ENCODE measurements at regions of chr3 and their contacts with region 1.

Region 1: DNA sequence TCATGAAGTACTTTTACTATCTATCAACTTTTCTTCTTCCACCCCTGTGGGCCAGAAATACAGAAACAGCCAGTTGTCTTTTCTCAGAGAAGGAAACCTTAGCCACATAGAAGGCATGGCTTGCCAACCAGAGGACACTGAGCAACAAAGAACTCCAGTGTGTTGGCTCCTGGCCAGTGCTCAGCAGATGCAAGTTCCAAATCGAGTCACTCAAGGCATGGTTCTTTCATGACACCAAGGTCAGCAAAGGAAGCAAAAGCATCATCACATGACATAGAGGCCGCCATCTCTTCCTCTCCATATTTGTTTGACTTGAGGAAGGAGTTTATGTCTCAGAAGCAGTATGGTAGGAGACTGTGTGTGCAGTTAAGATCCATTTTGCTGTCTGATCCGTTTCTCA is 92.2 kb downstream of the MYLK start:
- DNase-seq: no peak
- ATAC-seq: no peak
- H3K4me3 ChIP-seq: no peak overlapping the region
- H3K27ac ChIP-seq: no peak overlapping the region
- H3K4me1 ChIP-seq: no peaks in the 10 kb centered on the region
- H3K27me3 ChIP-seq: peaks cover 0 to 3% (median 0%) of the 10 kb centered on the region in 7 donors
- CTCF ChIP-seq: no peak

Region 2: GRCh38 chr3:123750659-123751420 is 41.1 kb before region 1 on chr3:
- intact Hi-C with region 1: no loop called
- DNase-seq: no peak
- ATAC-seq: peak; percentile 39 to 83 (median 71)
- H3K4me3 ChIP-seq: no peak overlapping the region
- H3K27ac ChIP-seq: peak overlapping the region in 1 of 10 donors; percentile 20
- H3K4me1 ChIP-seq: peaks cover 0 to 16% (median 8%) of the 10 kb centered on the region in 9 donors
- H3K27me3 ChIP-seq: no peaks in the 10 kb centered on the region
- CTCF ChIP-seq: no peak

Region 3: GRCh38 chr3:123773681-123774431 is 18.0 kb before region 1 on chr3:
- intact Hi-C with region 1: loop called in 1 of 10 experiments (anchors 1 kb)
- DNase-seq: no peak
- ATAC-seq: no peak
- H3K4me3 ChIP-seq: no peak overlapping the region
- H3K27ac ChIP-seq: no peak overlapping the region
- H3K4me1 ChIP-seq: no peaks in the 10 kb centered on the region
- H3K27me3 ChIP-seq: no peaks in the 10 kb centered on the region
- CTCF ChIP-seq: no peak